CD14-positive monocyte (primary cell): ENCODE measurements at regions of chr9 and their contacts with region 1.

Region 1: GRCh38 chr9:91150998-91151717 is 210.6 kb downstream of the AUH start:
- DNase-seq: peak; percentile 89 to 96 (median 95)
- H3K4me3 ChIP-seq: no peak overlapping the region
- H3K4me3 Mint-ChIP-seq: peak overlapping the region; percentile 31 to 46
- H3K27ac ChIP-seq: peak overlapping the region in 1 of 2 donors; percentile 76
- H3K27ac Mint-ChIP-seq: peak overlapping the region; percentile 87 to 96 (median 94)
- H3K4me1 ChIP-seq: peaks cover 47 to 48% of the 10 kb centered on the region in 2 donors
- H3K4me1 Mint-ChIP-seq: peaks cover 57% of the 10 kb centered on the region
- H3K27me3 ChIP-seq: no peaks in the 10 kb centered on the region
- H3K27me3 Mint-ChIP-seq: peaks cover 2 to 8% (median 6%) of the 10 kb centered on the region in 3 donors
- CTCF ChIP-seq: no peak

Region 2: GRCh38 chr9:91023741-91024140 is 127.4 kb before region 1 on chr9:
- intact Hi-C with region 1: no loop called
- DNase-seq: no peak
- H3K4me3 ChIP-seq: no peak overlapping the region
- H3K4me3 Mint-ChIP-seq: no peak overlapping the region
- H3K27ac ChIP-seq: no peak overlapping the region
- H3K27ac Mint-ChIP-seq: no peak overlapping the region
- H3K4me1 ChIP-seq: no peaks in the 10 kb centered on the region
- H3K4me1 Mint-ChIP-seq: no peaks in the 10 kb centered on the region
- H3K27me3 ChIP-seq: no peaks in the 10 kb centered on the region
- H3K27me3 Mint-ChIP-seq: peaks cover 3 to 7% (median 6%) of the 10 kb centered on the region in 3 donors
- CTCF ChIP-seq: no peak

Region 3: GRCh38 chr9:91036826-91037510 is 114.2 kb before region 1 on chr9:
- intact Hi-C with region 1: loop called in 1 of 2 experiments (anchors 5 kb)
- DNase-seq: peak; percentile 67 to 81 (median 68)
- H3K4me3 ChIP-seq: no peak overlapping the region
- H3K4me3 Mint-ChIP-seq: peak overlapping the region; percentile 39 to 78
- H3K27ac ChIP-seq: no peak overlapping the region
- H3K27ac Mint-ChIP-seq: peak overlapping the region in 2 of 7 donors; percentile 20 to 61
- H3K4me1 ChIP-seq: peaks cover 10 to 11% of the 10 kb centered on the region in 2 donors
- H3K4me1 Mint-ChIP-seq: peaks cover 17% of the 10 kb centered on the region
- H3K27me3 ChIP-seq: peaks cover 0 to 3% of the 10 kb centered on the region in 2 donors
- H3K27me3 Mint-ChIP-seq: peaks cover 5 to 14% (median 13%) of the 10 kb centered on the region in 3 donors
- CTCF ChIP-seq: peak; percentile 64

Region 4: GRCh38 chr9:91101611-91102168 is 49.5 kb before region 1 on chr9:
- intact Hi-C with region 1: loop called (anchors 2 to 5 kb)
- DNase-seq: no peak
- H3K4me3 ChIP-seq: no peak overlapping the region
- H3K4me3 Mint-ChIP-seq: no peak overlapping the region
- H3K27ac ChIP-seq: no peak overlapping the region
- H3K27ac Mint-ChIP-seq: no peak overlapping the region
- H3K4me1 ChIP-seq: peaks cover 22 to 24% of the 10 kb centered on the region in 2 donors
- H3K4me1 Mint-ChIP-seq: peaks cover 30% of the 10 kb centered on the region
- H3K27me3 ChIP-seq: no peaks in the 10 kb centered on the region
- H3K27me3 Mint-ChIP-seq: peaks cover 2 to 9% (median 3%) of the 10 kb centered on the region in 3 donors
- CTCF ChIP-seq: no peak

Region 5: DNA sequence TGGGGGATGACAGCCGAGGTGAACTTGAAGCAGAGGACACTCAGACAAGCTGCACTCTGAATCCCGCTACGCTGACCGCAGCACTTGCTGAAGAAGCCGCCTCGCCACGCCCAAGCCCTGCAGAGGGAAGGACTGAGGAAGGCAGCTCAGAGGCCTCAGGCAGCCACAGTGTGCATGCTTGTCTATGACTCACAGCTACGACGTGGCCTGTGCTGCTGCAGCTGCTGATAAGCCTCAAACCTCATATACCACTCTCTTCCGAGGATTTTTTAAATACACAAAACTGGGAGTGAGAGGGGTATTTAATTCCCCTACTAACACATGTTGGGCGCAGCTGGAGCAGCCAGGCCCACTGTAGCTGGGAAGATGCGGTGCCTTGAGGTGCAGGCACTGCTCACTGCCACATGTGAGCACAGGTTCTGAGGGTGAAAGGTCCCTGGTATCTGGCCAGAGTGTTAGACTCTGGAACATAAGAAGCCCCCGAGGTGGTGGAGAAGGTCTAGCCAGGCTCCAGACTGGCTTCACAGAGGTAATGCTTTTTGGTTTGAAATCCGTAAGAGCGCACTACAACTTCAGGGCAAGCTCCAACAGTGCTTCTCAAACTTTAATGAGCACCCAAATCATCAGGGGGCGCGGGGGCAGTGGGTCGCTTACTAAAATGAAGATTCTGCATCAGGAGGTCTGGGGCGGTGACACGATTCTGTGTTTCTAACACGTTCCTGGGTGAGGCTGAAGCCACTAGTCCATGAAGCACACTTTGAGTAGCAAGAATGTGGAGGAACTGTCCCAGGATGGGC is 13.8 kb after region 1 on chr9:
- intact Hi-C with region 1: loop called in 1 of 2 experiments (anchors 1 kb)
- DNase-seq: peak; percentile 95 to 96 (median 96)
- H3K4me3 ChIP-seq: peak overlapping the region in 1 of 3 experiments; percentile 28
- H3K4me3 Mint-ChIP-seq: peak overlapping the region; percentile 64 to 72
- H3K27ac ChIP-seq: peak overlapping the region; percentile 11 to 73
- H3K27ac Mint-ChIP-seq: peak overlapping the region; percentile 40 to 97 (median 83)
- H3K4me1 ChIP-seq: peaks cover 39 to 44% of the 10 kb centered on the region in 2 donors
- H3K4me1 Mint-ChIP-seq: peaks cover 41% of the 10 kb centered on the region
- H3K27me3 ChIP-seq: no peaks in the 10 kb centered on the region
- H3K27me3 Mint-ChIP-seq: peaks cover 0 to 5% (median 4%) of the 10 kb centered on the region in 3 donors
- CTCF ChIP-seq: no peak